ENCODE measurements at regions of chr12 and their contacts with region 1.

Region 1: GRCh38 chr12:56630160-56630632 is at the start of gene BAZ2A:
- DNase-seq: peak; percentile 64 to 91 (median 85)
- ATAC-seq: peak; percentile 68
- H3K4me3 ChIP-seq: peak within 1 kb of the TSS; percentile 74 to 99
- H3K4me3 Mint-ChIP-seq: peak within 1 kb of the TSS; percentile 82
- H3K27ac ChIP-seq: peak within 1 kb of the TSS; percentile 84 to 93
- H3K27ac Mint-ChIP-seq: peak within 1 kb of the TSS; percentile 93
- H3K4me1 ChIP-seq: peaks cover 56% of the 10 kb centered on the region
- H3K4me1 Mint-ChIP-seq: peaks cover 64% of the 10 kb centered on the region
- H3K27me3 ChIP-seq: no peaks in the 10 kb centered on the region
- H3K27me3 Mint-ChIP-seq: no peaks in the 10 kb centered on the region
- CTCF ChIP-seq: no peak
- total RNA-seq, gene BAZ2A: 197 to 198 TPM

Region 2: DNA sequence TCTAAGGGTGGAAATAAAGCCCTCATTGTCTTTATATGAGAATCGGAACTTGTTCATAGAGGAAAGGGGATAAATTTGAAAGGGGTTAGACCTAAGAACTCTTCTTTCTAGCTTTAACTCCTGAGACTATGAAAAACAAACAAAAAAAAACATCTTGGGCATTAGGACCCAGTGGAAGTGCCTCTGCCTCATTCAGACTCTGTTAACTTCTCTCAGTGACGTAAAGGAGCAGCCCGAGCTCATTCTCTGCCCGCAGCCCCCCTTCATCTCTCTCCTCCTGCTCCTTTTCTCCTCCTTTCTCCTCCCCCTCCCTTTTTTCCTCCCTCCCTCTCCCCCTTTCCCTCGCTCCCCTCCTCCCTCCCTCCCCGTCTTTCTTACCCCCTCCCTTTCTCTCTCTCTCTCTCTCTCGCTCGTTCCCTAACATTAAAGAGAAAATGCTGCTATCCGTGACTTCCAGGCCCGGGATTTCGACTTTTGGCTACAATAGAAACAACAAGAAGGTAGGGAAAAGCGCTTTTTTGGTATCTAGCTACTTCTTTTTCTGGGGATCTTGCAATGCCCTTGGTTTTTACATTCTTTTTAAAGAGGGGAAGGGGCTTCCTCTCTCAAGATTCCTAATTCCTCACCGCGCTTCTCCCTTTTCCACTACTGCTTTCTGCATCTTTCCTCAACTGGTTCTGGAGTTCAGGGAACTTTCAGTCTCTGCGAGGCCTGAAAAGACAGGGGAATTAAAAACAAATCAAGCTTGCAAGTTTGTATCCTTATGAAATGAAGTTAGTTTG is 108.4 kb before region 1 on chr12 and contains the start of gene RBMS2:
- CTCF ChIA-PET with region 1: no interaction called
- POLR2A ChIA-PET with region 1: interaction called, 5 read pairs
- intact Hi-C with region 1: loop called in 1 of 2 experiments (anchors 1 kb)
- DNase-seq: peak; percentile 6 to 85 (median 47)
- ATAC-seq: peak; percentile 95
- H3K4me3 ChIP-seq: peak within 1 kb of the TSS; percentile 43 to 50
- H3K4me3 Mint-ChIP-seq: peak within 1 kb of the TSS; percentile 93
- H3K27ac ChIP-seq: peak within 1 kb of the TSS; percentile 46 to 61
- H3K27ac Mint-ChIP-seq: peak within 1 kb of the TSS; percentile 92
- H3K4me1 ChIP-seq: peaks cover 23% of the 10 kb centered on the region
- H3K4me1 Mint-ChIP-seq: peaks cover 30% of the 10 kb centered on the region
- H3K27me3 ChIP-seq: no peaks in the 10 kb centered on the region
- H3K27me3 Mint-ChIP-seq: no peaks in the 10 kb centered on the region
- CTCF ChIP-seq: no peak
- total RNA-seq, gene RBMS2: 8.3 to 9.9 TPM

Region 3: GRCh38 chr12:56571126-56571525 is 59.1 kb before region 1 on chr12:
- CTCF ChIA-PET with region 1: no interaction called
- POLR2A ChIA-PET with region 1: no interaction called
- intact Hi-C with region 1: no loop called
- DNase-seq: no peak
- ATAC-seq: no peak
- H3K4me3 ChIP-seq: no peak overlapping the region
- H3K4me3 Mint-ChIP-seq: no peak overlapping the region
- H3K27ac ChIP-seq: no peak overlapping the region
- H3K27ac Mint-ChIP-seq: no peak overlapping the region
- H3K4me1 ChIP-seq: peaks cover 16% of the 10 kb centered on the region
- H3K4me1 Mint-ChIP-seq: peaks cover 25% of the 10 kb centered on the region
- H3K27me3 ChIP-seq: no peaks in the 10 kb centered on the region
- H3K27me3 Mint-ChIP-seq: no peaks in the 10 kb centered on the region
- CTCF ChIP-seq: no peak

Region 4: DNA sequence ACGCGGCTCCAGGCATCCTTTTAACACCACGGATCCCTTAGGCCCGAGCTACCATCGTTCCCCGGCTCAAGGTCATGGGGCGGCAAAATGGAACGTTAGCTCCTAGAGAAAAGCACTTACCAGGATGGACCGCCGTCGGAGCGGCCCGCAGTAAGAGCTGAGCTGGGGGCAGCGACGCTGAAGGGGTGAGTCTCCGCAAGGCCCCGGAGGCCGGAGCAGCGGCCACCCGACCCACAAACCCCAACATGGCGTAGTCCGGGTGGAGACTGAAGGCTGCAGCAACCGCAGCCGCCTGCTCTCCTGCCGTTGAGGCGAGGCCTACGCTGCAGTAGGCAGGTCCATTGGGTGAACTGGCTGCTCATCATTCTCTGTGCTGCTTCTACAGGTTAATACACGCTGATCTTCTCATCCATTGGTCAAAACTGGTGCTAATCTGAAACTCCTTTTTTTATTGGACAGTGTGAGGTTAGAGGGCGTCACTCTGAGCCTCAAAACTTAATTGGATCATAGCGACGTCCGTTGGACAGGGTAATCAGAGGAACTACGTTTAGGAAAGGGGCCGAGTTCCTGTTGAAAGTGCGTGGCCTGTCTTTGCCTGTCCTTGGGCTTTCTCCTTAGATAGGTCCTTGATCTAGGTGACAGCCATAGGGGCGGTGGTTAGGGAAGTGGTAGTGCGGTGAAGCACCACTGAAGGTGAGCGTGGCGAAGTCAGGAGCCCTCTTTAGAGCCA is 15.7 kb after region 1 on chr12 and contains the start of gene ATP5F1B:
- CTCF ChIA-PET with region 1: interaction called, 21 read pairs
- POLR2A ChIA-PET with region 1: interaction called, 58 read pairs
- intact Hi-C with region 1: loop called in 1 of 2 experiments (anchors 1 kb)
- DNase-seq: peak; percentile 77 to 99 (median 88)
- ATAC-seq: peak; percentile 93
- H3K4me3 ChIP-seq: peak within 1 kb of the TSS; percentile 96 to 99
- H3K4me3 Mint-ChIP-seq: peak within 1 kb of the TSS; percentile 96
- H3K27ac ChIP-seq: peak within 1 kb of the TSS; percentile 90 to 94
- H3K27ac Mint-ChIP-seq: peak within 1 kb of the TSS; percentile 99
- H3K4me1 ChIP-seq: peaks cover 21% of the 10 kb centered on the region
- H3K4me1 Mint-ChIP-seq: peaks cover 33% of the 10 kb centered on the region
- H3K27me3 ChIP-seq: no peaks in the 10 kb centered on the region
- H3K27me3 Mint-ChIP-seq: no peaks in the 10 kb centered on the region
- CTCF ChIP-seq: no peak
- total RNA-seq, gene ATP5F1B: 417 to 429 TPM

Region 5: DNA sequence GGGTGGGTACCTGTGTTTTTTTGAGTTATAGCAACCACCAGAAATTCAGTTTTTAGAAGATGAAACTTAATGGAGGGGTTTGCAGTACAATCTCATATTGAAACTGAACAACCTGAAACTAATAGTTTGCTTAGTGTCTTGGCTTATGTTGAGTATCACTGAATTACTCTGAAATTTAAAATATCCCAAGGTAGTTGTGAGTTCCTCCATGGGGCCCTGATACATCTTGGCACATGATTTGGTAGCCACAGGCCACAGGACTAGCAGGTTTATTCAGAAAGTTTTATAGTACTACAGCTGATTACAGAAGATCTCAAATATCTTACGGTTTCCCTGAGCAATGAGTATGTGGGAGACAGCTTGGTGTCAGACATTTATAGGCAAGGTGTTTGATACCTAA is 47.5 kb after region 1 on chr12:
- CTCF ChIA-PET with region 1: no interaction called
- POLR2A ChIA-PET with region 1: no interaction called
- intact Hi-C with region 1: no loop called
- DNase-seq: no peak
- ATAC-seq: no peak
- H3K4me3 ChIP-seq: no peak overlapping the region
- H3K4me3 Mint-ChIP-seq: no peak overlapping the region
- H3K27ac ChIP-seq: peak overlapping the region in 1 of 2 experiments; percentile 27
- H3K27ac Mint-ChIP-seq: peak overlapping the region; percentile 65
- H3K4me1 ChIP-seq: peaks cover 72% of the 10 kb centered on the region
- H3K4me1 Mint-ChIP-seq: peaks cover 74% of the 10 kb centered on the region
- H3K27me3 ChIP-seq: no peaks in the 10 kb centered on the region
- H3K27me3 Mint-ChIP-seq: no peaks in the 10 kb centered on the region
- CTCF ChIP-seq: no peak